ENCODE measurements at regions of chr16 and their contacts with region 1.

Region 1: GRCh38 chr16:81497690-81498089 is 53.1 kb downstream of the CMIP start:
- DNase-seq: peak; percentile 72
- ATAC-seq: no peak
- H3K4me3 ChIP-seq: peak overlapping the region in 1 of 5 experiments; percentile 3
- H3K4me3 Mint-ChIP-seq: peak overlapping the region; percentile 29
- H3K27ac ChIP-seq: no peak overlapping the region
- H3K27ac Mint-ChIP-seq: peak overlapping the region; percentile 6
- H3K4me1 ChIP-seq: peaks cover 63 to 79% of the 10 kb centered on the region in 2 donors
- H3K4me1 Mint-ChIP-seq: peaks cover 86% of the 10 kb centered on the region
- H3K27me3 ChIP-seq: no peaks in the 10 kb centered on the region
- H3K27me3 Mint-ChIP-seq: no peaks in the 10 kb centered on the region
- CTCF ChIP-seq: peak; percentile 31

Region 2: GRCh38 chr16:81429045-81429521 is 68.6 kb before region 1 on chr16:
- CTCF ChIA-PET with region 1: interaction called, 4 read pairs
- POLR2A ChIA-PET with region 1: interaction called, 11 read pairs
- intact Hi-C with region 1: no loop called
- DNase-seq: peak; percentile 53
- ATAC-seq: peak; percentile 37
- H3K4me3 ChIP-seq: no peak overlapping the region
- H3K4me3 Mint-ChIP-seq: no peak overlapping the region
- H3K27ac ChIP-seq: no peak overlapping the region
- H3K27ac Mint-ChIP-seq: peak overlapping the region; percentile 48
- H3K4me1 ChIP-seq: peaks cover 17 to 22% of the 10 kb centered on the region in 2 donors
- H3K4me1 Mint-ChIP-seq: peaks cover 38% of the 10 kb centered on the region
- H3K27me3 ChIP-seq: no peaks in the 10 kb centered on the region
- H3K27me3 Mint-ChIP-seq: no peaks in the 10 kb centered on the region
- CTCF ChIP-seq: peak; percentile 60

Region 3: GRCh38 chr16:81481207-81481821 is 16.4 kb before region 1 on chr16:
- CTCF ChIA-PET with region 1: interaction called, 49 read pairs
- POLR2A ChIA-PET with region 1: interaction called, 21 read pairs
- intact Hi-C with region 1: loop called (anchors 1 kb)
- DNase-seq: peak; percentile 90
- ATAC-seq: peak; percentile 79
- H3K4me3 ChIP-seq: peak overlapping the region; percentile 8 to 53 (median 21)
- H3K4me3 Mint-ChIP-seq: peak overlapping the region; percentile 87
- H3K27ac ChIP-seq: peak overlapping the region; percentile 92 to 95
- H3K27ac Mint-ChIP-seq: peak overlapping the region; percentile 91
- H3K4me1 ChIP-seq: peaks cover 73 to 78% of the 10 kb centered on the region in 2 donors
- H3K4me1 Mint-ChIP-seq: peaks cover 86% of the 10 kb centered on the region
- H3K27me3 ChIP-seq: no peaks in the 10 kb centered on the region
- H3K27me3 Mint-ChIP-seq: no peaks in the 10 kb centered on the region
- CTCF ChIP-seq: no peak

Region 4: GRCh38 chr16:81521151-81521626 is 23.5 kb after region 1 on chr16:
- CTCF ChIA-PET with region 1: interaction called, 4 read pairs
- POLR2A ChIA-PET with region 1: interaction called, 27 read pairs
- intact Hi-C with region 1: loop called (anchors 1 kb)
- DNase-seq: peak; percentile 84
- ATAC-seq: peak; percentile 79
- H3K4me3 ChIP-seq: no peak overlapping the region
- H3K4me3 Mint-ChIP-seq: no peak overlapping the region
- H3K27ac ChIP-seq: peak overlapping the region in 1 of 2 donors; percentile 32
- H3K27ac Mint-ChIP-seq: peak overlapping the region; percentile 63
- H3K4me1 ChIP-seq: peaks cover 17 to 33% of the 10 kb centered on the region in 2 donors
- H3K4me1 Mint-ChIP-seq: peaks cover 38% of the 10 kb centered on the region
- H3K27me3 ChIP-seq: no peaks in the 10 kb centered on the region
- H3K27me3 Mint-ChIP-seq: no peaks in the 10 kb centered on the region
- CTCF ChIP-seq: no peak

Region 5: GRCh38 chr16:81730090-81731051 is 232.7 kb after region 1 on chr16:
- CTCF ChIA-PET with region 1: no interaction called
- POLR2A ChIA-PET with region 1: no interaction called
- intact Hi-C with region 1: loop called (anchors 1 kb)
- DNase-seq: peak; percentile 77
- ATAC-seq: peak; percentile 85
- H3K4me3 ChIP-seq: peak overlapping the region in 4 of 5 experiments; percentile 44 to 61 (median 55)
- H3K4me3 Mint-ChIP-seq: peak overlapping the region; percentile 90
- H3K27ac ChIP-seq: peak overlapping the region in 1 of 2 donors; percentile 62
- H3K27ac Mint-ChIP-seq: peak overlapping the region; percentile 90
- H3K4me1 ChIP-seq: peaks cover 12 to 15% of the 10 kb centered on the region in 2 donors
- H3K4me1 Mint-ChIP-seq: peaks cover 22% of the 10 kb centered on the region
- H3K27me3 ChIP-seq: no peaks in the 10 kb centered on the region
- H3K27me3 Mint-ChIP-seq: no peaks in the 10 kb centered on the region
- CTCF ChIP-seq: peak; percentile 74

Region 6: GRCh38 chr16:81779536-81780320 is 282.0 kb after region 1 on chr16:
- CTCF ChIA-PET with region 1: no interaction called
- POLR2A ChIA-PET with region 1: no interaction called
- intact Hi-C with region 1: no loop called
- DNase-seq: peak; percentile 60
- ATAC-seq: peak; percentile 8
- H3K4me3 ChIP-seq: peak overlapping the region; percentile 81 to 90 (median 83)
- H3K4me3 Mint-ChIP-seq: peak overlapping the region; percentile 99
- H3K27ac ChIP-seq: peak overlapping the region; percentile 72 to 91
- H3K27ac Mint-ChIP-seq: peak overlapping the region; percentile 95
- H3K4me1 ChIP-seq: peaks cover 59 to 67% of the 10 kb centered on the region in 2 donors
- H3K4me1 Mint-ChIP-seq: peaks cover 73% of the 10 kb centered on the region
- H3K27me3 ChIP-seq: no peaks in the 10 kb centered on the region
- H3K27me3 Mint-ChIP-seq: no peaks in the 10 kb centered on the region
- CTCF ChIP-seq: no peak

Measured in B cell (primary cell).